ENCODE measurements at regions of chr20 and their contacts with region 1.

Region 1: GRCh38 chr20:33506576-33506975 is 16.7 kb downstream of the CBFA2T2 start:
- DNase-seq: no peak
- H3K4me3 ChIP-seq: no peak overlapping the region
- H3K27ac ChIP-seq: no peak overlapping the region
- H3K4me1 ChIP-seq: peaks cover 40% of the 10 kb centered on the region
- CTCF ChIP-seq: no peak

Region 2: DNA sequence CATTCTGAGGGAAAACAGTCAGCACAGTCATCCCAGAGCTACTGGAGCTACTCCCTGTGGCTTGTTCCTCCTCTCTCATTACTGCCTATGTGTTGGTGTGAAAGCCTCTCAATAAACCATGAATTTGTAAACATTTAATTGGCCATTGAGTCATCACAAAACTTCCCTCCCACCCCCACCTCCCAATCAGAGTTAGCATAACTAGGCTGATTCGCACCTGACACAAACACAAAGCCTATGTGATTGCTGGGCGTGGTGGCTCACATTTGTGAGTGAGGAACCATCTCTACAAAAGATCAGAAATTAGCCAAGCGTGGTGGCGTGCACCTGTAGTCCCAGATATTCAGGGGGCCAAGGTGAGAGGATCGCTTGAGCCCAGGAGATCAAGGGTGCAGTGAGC is 45.9 kb before region 1 on chr20:
- CTCF ChIA-PET with region 1: no interaction called
- POLR2A ChIA-PET with region 1: interaction called, 7 read pairs
- intact Hi-C with region 1: loop called (anchors 5 kb)
- DNase-seq: peak; percentile 80
- H3K4me3 ChIP-seq: no peak overlapping the region
- H3K27ac ChIP-seq: peak overlapping the region; percentile 59
- H3K4me1 ChIP-seq: peaks cover 31% of the 10 kb centered on the region
- CTCF ChIP-seq: no peak

Region 3: GRCh38 chr20:33539129-33539528 is 32.6 kb after region 1 on chr20:
- CTCF ChIA-PET with region 1: no interaction called
- POLR2A ChIA-PET with region 1: no interaction called
- intact Hi-C with region 1: no loop called
- DNase-seq: no peak
- H3K4me3 ChIP-seq: no peak overlapping the region
- H3K27ac ChIP-seq: no peak overlapping the region
- H3K4me1 ChIP-seq: peaks cover 26% of the 10 kb centered on the region
- CTCF ChIP-seq: no peak

Measured in OCI-LY7 (cell line).